Activated CD4-positive, alpha-beta T cell treated with anti-CD3 and anti-CD28 coated beads, Interleukin-2, amount 10 ng/mL, durations not matched to agents 7 days and 5 days (primary cell): ENCODE measurements at regions of chr6 and their contacts with region 1.

Region 1: DNA sequence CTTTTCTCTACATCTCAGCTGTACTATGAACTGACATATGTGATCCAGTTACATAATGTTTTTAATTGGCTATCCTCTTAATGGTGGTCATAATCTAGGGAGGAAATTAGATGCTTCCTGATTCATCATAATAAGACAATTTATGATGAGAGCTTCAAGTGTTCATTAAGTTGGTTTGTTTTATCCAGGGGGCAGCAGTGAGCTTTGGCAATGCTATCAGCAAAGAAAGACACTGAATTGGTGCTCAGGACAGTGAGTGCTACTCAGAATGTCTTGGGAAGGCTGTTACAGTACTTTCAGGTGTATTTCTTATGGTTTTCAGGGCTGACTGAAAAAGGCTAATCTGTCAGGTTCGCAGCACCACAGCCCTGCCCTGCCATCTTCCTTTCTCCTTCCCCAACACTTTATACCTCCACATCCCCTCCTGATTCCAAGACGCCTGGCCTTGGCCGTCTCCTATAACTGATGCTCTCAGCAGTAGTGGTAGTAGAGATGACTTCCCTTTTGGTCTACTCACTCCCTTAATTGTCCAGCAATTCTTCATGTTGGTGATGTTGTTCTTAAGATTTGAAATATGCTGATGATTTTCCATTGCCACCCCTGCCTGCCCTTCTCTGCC is 67.0 kb upstream of the TNFAIP3 start:
- DNase-seq: peak; percentile 75
- H3K4me3 Mint-ChIP-seq: no peak overlapping the region
- H3K27ac Mint-ChIP-seq: peak overlapping the region; percentile 46
- H3K4me1 Mint-ChIP-seq: peaks cover 65% of the 10 kb centered on the region
- H3K27me3 Mint-ChIP-seq: no peaks in the 10 kb centered on the region

Region 2: DNA sequence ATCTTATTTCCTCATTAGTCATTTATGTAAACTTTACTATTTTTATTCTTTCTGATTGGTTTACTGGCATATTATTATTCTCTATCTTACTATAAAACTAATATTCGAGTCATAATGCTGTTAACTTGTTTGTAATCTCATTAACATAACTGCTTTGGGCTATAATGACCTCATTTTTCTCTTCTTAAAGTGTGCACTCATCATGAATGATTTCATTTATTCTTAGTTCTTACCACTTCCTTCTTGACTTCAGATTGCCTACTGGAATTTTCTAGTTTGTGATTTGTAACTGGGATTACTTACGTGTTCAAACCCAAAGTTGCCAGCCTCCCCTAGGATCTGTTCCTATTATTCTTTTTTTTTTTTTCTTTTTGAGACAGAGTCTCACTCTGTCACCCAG is 24.8 kb before region 1 on chr6:
- CTCF ChIA-PET with region 1: no interaction called
- POLR2A ChIA-PET with region 1: no interaction called
- DNase-seq: no peak
- H3K4me3 Mint-ChIP-seq: no peak overlapping the region
- H3K27ac Mint-ChIP-seq: no peak overlapping the region
- H3K4me1 Mint-ChIP-seq: no peaks in the 10 kb centered on the region
- H3K27me3 Mint-ChIP-seq: no peaks in the 10 kb centered on the region

Region 3: GRCh38 chr6:137811121-137811915 is 11.3 kb after region 1 on chr6:
- CTCF ChIA-PET with region 1: interaction called, 26 read pairs
- POLR2A ChIA-PET with region 1: no interaction called
- DNase-seq: peak; percentile 72
- H3K4me3 Mint-ChIP-seq: peak overlapping the region; percentile 20
- H3K27ac Mint-ChIP-seq: peak overlapping the region; percentile 85
- H3K4me1 Mint-ChIP-seq: peaks cover 37% of the 10 kb centered on the region
- H3K27me3 Mint-ChIP-seq: no peaks in the 10 kb centered on the region